Heart right ventricle (tissue), 16 donors: ENCODE measurements at regions of chr10 and their contacts with region 1.

Region 1: DNA sequence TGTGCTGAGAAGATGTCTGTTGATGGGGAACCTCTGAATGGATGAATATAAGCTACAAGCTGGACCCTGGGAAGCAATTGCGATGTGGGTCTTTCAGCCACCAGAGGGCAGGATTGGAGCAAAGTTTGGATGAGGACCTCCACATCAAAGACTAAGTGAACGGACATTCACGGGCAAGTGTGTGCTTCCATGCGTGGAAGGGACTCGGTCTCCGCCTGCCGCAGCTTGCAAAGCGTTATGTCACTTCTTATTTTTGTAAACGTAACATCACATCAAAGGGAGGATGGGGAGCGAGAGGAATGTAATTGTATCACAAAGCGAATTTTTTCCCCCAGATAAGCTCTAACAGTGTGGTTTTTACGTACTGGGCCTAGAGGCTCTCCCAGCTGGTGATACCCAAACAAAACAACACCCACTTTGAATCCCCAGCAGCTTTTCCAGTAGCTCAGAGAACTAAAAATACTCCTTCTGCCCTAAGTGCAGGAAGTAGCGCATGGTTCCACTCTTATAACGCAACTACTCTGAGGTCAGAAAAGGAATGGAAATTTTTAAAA is 65.0 kb downstream of the VWA2 start:
- DNase-seq: peak; percentile 73 to 90
- ATAC-seq: peak; percentile 80 to 91 (median 87)
- H3K4me3 ChIP-seq: peak overlapping the region in 9 of 10 donors; percentile 26 to 51 (median 44)
- H3K27ac ChIP-seq: peak overlapping the region in 8 of 10 donors; percentile 14 to 65 (median 44)
- H3K4me1 ChIP-seq: peaks cover 7 to 46% (median 28%) of the 10 kb centered on the region in 9 donors
- H3K27me3 ChIP-seq: no peaks in the 10 kb centered on the region
- CTCF ChIP-seq: peak; percentile 72 to 86 (median 78)

Region 2: GRCh38 chr10:114403541-114404161 is 99.6 kb after region 1 on chr10:
- intact Hi-C with region 1: loop called in 2 of 10 experiments (anchors 5 kb)
- DNase-seq: peak in 1 of 2 donors; percentile 51
- ATAC-seq: peak; percentile 50 to 81 (median 70)
- H3K4me3 ChIP-seq: peak overlapping the region; percentile 50 to 70 (median 62)
- H3K27ac ChIP-seq: peak overlapping the region in 9 of 10 donors; percentile 41 to 82 (median 63)
- H3K4me1 ChIP-seq: peaks cover 2 to 63% (median 44%) of the 10 kb centered on the region in 9 donors
- H3K27me3 ChIP-seq: peaks cover 0 to 61% (median 8%) of the 10 kb centered on the region in 7 donors
- CTCF ChIP-seq: peak in 7 of 9 donors; percentile 18 to 58 (median 33)

Region 3: DNA sequence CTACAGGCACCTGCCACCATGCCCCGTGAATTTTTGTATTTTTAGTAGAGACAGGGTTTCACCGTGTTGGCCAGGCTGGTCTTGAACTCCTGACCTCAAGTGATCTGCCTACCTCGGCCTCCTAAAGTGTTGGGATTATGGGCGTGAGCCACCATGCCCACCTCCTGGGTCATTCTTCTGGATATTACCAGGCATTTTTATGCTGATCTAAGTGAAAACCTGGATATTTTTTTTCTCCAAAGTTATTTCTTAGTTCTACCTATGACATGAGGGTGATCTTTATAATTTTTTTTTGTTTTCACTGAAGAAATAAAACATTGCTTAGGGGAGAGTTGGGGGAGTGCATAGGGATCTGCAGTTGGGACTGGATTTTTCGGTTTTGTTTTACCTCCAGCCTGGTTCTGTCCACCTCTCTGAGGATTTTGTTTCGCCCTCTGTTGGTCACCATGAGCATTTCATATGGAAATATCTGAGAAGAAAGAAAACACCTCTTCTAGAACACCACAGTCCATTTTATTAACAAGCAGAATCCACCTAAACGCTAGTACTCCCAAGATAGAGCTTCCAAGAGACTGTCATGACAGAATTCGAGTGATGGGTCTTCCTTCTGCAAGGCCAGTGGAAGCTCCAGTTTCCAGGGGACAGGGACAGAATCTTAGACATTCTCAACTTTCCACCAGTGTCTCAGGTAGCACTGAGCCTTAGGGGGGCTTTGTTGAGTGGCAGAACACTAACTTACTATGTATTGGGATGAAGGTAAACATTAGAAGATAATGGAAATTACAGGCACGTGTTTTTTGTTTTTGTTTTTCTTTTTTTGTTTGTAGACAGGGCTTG is 133.6 kb after region 1 on chr10:
- intact Hi-C with region 1: loop called in 6 of 10 experiments (anchors 5 to 10 kb)
- DNase-seq: no peak
- ATAC-seq: no peak
- H3K4me3 ChIP-seq: no peak overlapping the region
- H3K27ac ChIP-seq: no peak overlapping the region
- H3K4me1 ChIP-seq: no peaks in the 10 kb centered on the region
- H3K27me3 ChIP-seq: no peaks in the 10 kb centered on the region
- CTCF ChIP-seq: peak in 8 of 9 donors; percentile 8 to 56 (median 45)

Region 4: GRCh38 chr10:114779803-114780609 is 475.9 kb after region 1 on chr10:
- intact Hi-C with region 1: loop called in 2 of 10 experiments (anchors 10 kb)
- DNase-seq: no peak
- ATAC-seq: peak in 5 of 8 donors; percentile 38 to 76 (median 51)
- H3K4me3 ChIP-seq: no peak overlapping the region
- H3K27ac ChIP-seq: peak overlapping the region in 7 of 10 donors; percentile 16 to 51 (median 37)
- H3K4me1 ChIP-seq: peaks cover 0 to 37% (median 13%) of the 10 kb centered on the region in 9 donors
- H3K27me3 ChIP-seq: no peaks in the 10 kb centered on the region
- CTCF ChIP-seq: no peak

Region 5: GRCh38 chr10:114821293-114821914 is 517.3 kb after region 1 on chr10 and contains the start of gene FHIP2A:
- intact Hi-C with region 1: loop called in 1 of 10 experiments (anchors 10 kb)
- DNase-seq: peak; percentile 78 to 86
- ATAC-seq: peak; percentile 78 to 97 (median 88)
- H3K4me3 ChIP-seq: peak within 1 kb of the TSS; percentile 66 to 98 (median 86)
- H3K27ac ChIP-seq: peak within 1 kb of the TSS; percentile 95 to 99 (median 97)
- H3K4me1 ChIP-seq: peaks cover 4 to 44% (median 39%) of the 10 kb centered on the region in 9 donors
- H3K27me3 ChIP-seq: no peaks in the 10 kb centered on the region
- CTCF ChIP-seq: peak; percentile 37 to 85 (median 66)
- total RNA-seq, gene FHIP2A: 19.1 to 36.6 (median 27.7) TPM